ENCODE measurements at regions of chr17 and their contacts with region 1.

Region 1: DNA sequence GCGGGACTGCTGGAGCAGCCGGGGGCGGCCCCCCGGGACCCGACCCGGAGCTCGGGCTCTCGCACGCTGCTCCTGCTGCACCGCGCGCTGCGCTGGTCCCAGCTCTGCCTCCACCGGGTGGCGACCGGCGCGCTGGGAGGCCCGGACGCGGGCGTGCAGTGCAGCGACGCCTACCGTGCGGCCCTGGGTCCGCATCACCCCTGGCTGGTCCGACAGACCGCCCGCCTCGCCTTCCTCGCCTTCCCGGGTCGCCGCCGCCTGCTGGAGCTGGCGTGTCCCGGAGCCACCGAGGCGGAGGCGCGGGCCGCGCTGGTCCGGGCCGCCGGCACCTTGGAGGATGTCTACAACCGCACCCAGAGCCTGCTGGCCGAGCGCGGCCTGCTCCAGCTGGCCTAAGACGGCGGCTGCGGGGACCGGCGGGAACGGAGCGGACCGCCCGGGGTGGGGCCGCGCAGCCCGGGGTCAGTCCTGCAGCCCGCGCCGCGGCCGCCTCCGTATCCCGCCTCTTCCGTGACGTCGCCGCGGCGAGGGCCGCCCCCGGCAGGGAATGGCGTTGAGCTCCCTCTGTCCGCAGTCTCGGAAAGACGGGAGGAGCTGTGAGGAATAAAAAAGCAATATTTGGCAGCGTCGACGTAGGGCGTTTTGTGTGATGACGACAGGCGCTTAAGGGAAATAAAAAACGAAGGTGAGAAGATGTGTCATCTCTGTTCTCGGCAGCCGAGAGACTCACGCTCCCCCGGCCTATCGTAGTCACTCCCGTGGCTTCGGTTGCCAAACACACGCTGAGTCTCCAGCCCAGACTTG is 1.3 kb downstream of the GLTPD2 start:
- DNase-seq: peak; percentile 82
- H3K4me3 Mint-ChIP-seq: peak overlapping the region; percentile 85
- H3K27ac Mint-ChIP-seq: peak overlapping the region; percentile 96
- H3K4me1 Mint-ChIP-seq: peaks cover 36% of the 10 kb centered on the region
- H3K27me3 Mint-ChIP-seq: peaks cover 45% of the 10 kb centered on the region

Region 2: GRCh38 chr17:4641297-4642195 is 148.6 kb before region 1 on chr17 and contains the start of gene ALOX15:
- intact Hi-C with region 1: loop called (anchors 5 kb)
- DNase-seq: no peak
- H3K4me3 Mint-ChIP-seq: peak within 1 kb of the TSS; percentile 7
- H3K27ac Mint-ChIP-seq: no peak within 1 kb of the TSS
- H3K4me1 Mint-ChIP-seq: peaks cover 16% of the 10 kb centered on the region
- H3K27me3 Mint-ChIP-seq: peaks cover 74% of the 10 kb centered on the region
- total RNA-seq, gene ALOX15: not detected in 2 replicates

Region 3: GRCh38 chr17:4806777-4807604 is 16.9 kb after region 1 on chr17 and contains the start of gene PLD2:
- intact Hi-C with region 1: loop called (anchors 1 kb)
- DNase-seq: peak; percentile 89
- H3K4me3 Mint-ChIP-seq: peak within 1 kb of the TSS; percentile 82
- H3K27ac Mint-ChIP-seq: peak within 1 kb of the TSS; percentile 34
- H3K4me1 Mint-ChIP-seq: peaks cover 11% of the 10 kb centered on the region
- H3K27me3 Mint-ChIP-seq: peaks cover 2% of the 10 kb centered on the region
- total RNA-seq, gene PLD2: 16.7 and 22.2 TPM in 2 replicates

Region 4: GRCh38 chr17:4881761-4882555 is 91.9 kb after region 1 on chr17:
- intact Hi-C with region 1: loop called (anchors 1 kb)
- DNase-seq: peak; percentile 40
- H3K4me3 Mint-ChIP-seq: no peak overlapping the region
- H3K27ac Mint-ChIP-seq: no peak overlapping the region
- H3K4me1 Mint-ChIP-seq: peaks cover 5% of the 10 kb centered on the region
- H3K27me3 Mint-ChIP-seq: no peaks in the 10 kb centered on the region

Region 5: DNA sequence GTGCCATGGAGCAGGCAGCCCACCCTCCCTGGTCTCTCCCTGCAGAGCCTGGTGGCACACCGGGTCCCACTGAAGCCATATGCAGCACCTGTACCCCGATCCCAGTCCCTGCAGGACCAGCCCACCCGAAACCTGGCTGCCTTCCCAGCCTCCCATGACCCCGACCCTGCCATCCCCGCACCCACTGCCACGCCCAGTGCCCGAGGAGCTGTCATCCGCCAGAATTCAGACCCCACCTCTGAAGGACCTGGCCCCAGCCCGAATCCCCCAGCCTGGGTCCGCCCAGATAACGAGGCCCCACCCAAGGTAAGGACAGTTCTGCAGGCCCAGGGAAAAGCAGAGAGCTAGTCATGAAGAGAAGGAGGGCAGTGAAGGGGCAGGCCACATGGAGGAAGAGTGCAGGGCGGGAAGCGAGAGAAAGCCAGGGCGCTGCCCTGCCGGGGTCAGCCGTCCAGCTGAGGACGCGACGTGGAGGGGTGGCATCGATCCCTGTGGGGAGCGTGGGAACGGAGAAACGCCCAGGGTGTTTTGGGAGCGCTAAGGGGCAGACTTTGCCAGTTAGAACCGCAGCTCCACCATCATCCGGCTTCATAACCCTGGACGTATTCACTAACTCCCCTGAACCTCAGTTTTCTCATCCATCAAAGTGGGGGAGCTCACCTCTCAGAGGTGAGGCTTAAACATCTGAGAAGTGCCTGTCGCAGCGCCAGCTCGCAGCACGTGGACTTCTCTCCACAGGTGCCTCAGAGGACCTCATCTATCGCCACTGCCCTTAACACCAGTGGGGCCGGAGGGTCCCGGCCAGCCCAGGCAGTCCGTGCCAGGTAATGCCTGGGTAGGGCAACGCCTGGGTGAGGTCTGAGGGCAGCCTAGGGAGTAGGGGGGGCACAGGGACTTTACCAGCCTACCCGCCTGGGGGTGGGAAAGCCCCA is 101.6 kb after region 1 on chr17:
- intact Hi-C with region 1: loop called (anchors 1 kb)
- DNase-seq: no peak
- H3K4me3 Mint-ChIP-seq: no peak overlapping the region
- H3K27ac Mint-ChIP-seq: no peak overlapping the region
- H3K4me1 Mint-ChIP-seq: peaks cover 5% of the 10 kb centered on the region
- H3K27me3 Mint-ChIP-seq: no peaks in the 10 kb centered on the region

Region 6: GRCh38 chr17:4903051-4903818 is 113.1 kb after region 1 on chr17 and contains the start of gene CHRNE:
- intact Hi-C with region 1: loop called (anchors 1 kb)
- DNase-seq: peak; percentile 61
- H3K4me3 Mint-ChIP-seq: peak within 1 kb of the TSS; percentile 21
- H3K27ac Mint-ChIP-seq: peak within 1 kb of the TSS; percentile 52
- H3K4me1 Mint-ChIP-seq: peaks cover 25% of the 10 kb centered on the region
- H3K27me3 Mint-ChIP-seq: peaks cover 16% of the 10 kb centered on the region
- total RNA-seq, gene CHRNE: 0.52 and 0.61 TPM in 2 replicates

Region 7: DNA sequence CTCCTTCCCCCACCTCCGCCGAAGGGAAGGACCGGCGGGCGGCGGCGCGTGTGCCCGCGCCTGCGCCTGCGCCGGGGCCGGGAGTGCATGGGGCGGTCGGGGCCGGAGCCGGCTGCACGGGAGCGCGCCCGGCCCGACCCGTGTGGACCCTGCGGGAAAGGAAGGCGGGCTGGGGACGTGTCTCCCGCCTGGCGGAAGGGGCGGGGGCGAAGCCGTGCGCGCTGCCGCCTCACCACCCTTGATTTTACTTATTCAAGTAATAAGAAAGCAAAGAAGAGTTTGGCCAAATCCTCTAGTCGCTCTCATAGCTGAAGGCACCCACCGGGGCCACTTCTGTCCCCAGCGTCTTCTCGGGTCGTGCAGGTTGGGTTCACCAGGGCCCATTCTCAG is 158.8 kb after region 1 on chr17:
- intact Hi-C with region 1: loop called (anchors 2 kb)
- DNase-seq: peak; percentile 77
- H3K4me3 Mint-ChIP-seq: peak overlapping the region; percentile 97
- H3K27ac Mint-ChIP-seq: peak overlapping the region; percentile 100
- H3K4me1 Mint-ChIP-seq: peaks cover 49% of the 10 kb centered on the region
- H3K27me3 Mint-ChIP-seq: peaks cover 2% of the 10 kb centered on the region

Measured in activated T-helper 1 cell treated with anti-CD3 and anti-CD28 coated beads, Interleukin-12 subunit alpha, Interleukin-12 subunit beta, Interleukin-2, Interleukin-4 antibody, amounts not matched to agents 30 ng/mL and 10 ng/mL and 1 ng/mL, durations not matched to agents 14 hours and 24 hours and 36 hours (primary cell).